GM13976 (cell line): ENCODE measurements at regions of chr2 and their contacts with region 1.

Region 1: GRCh38 chr2:172465417-172466334 is 38.3 kb downstream of the ITGA6 start:
- DNase-seq: peak; percentile 63
- CTCF ChIP-seq: peak; percentile 79

Region 2: GRCh38 chr2:171615069-171615468 is 850.6 kb before region 1 on chr2:
- in situ Hi-C with region 1: loop called (anchors 25 kb)
- DNase-seq: no peak
- CTCF ChIP-seq: no peak

Region 3: GRCh38 chr2:171703574-171704347 is 761.9 kb before region 1 on chr2:
- in situ Hi-C with region 1: loop called (anchors 25 kb)
- DNase-seq: peak; percentile 53
- CTCF ChIP-seq: peak; percentile 49

Region 4: DNA sequence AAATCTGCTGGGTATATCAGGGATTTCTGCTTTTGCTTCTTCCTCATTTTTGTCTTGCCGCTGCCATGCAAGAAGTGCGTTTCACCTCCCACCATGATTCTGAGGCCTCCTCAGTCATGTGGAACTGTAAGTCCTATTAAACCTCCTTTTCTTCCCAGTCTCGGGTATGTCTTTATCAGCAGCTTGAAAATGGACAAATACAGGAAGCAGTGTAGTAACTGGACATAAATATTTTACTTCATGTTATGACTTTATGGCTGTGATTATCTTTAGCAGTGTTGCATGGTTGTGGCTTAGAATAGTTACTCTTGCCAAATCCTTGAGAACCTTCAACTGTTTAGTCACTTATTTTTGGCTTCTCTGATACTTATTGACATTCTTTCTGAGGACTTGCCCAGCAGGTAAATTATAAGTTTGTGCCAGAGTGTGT is 296.7 kb before region 1 on chr2:
- in situ Hi-C with region 1: loop called (anchors 10 kb)
- DNase-seq: no peak
- CTCF ChIP-seq: no peak

Region 5: GRCh38 chr2:172829229-172829628 is 363.6 kb after region 1 on chr2:
- in situ Hi-C with region 1: no loop called
- DNase-seq: no peak
- CTCF ChIP-seq: no peak